Activated CD4-positive, alpha-beta T cell treated with anti-CD3 and anti-CD28 coated beads for 36 hours (primary cell): ENCODE measurements at regions of chr21 and their contacts with region 1.

Region 1: GRCh38 chr21:32727687-32728455 is at the start of gene SYNJ1:
- DNase-seq: peak; percentile 97
- ATAC-seq: peak; percentile 91
- H3K4me3 Mint-ChIP-seq: peak within 1 kb of the TSS; percentile 93
- H3K27ac Mint-ChIP-seq: peak within 1 kb of the TSS; percentile 91
- H3K4me1 Mint-ChIP-seq: peaks cover 54% of the 10 kb centered on the region
- H3K27me3 Mint-ChIP-seq: no peaks in the 10 kb centered on the region
- total RNA-seq, gene SYNJ1: 6.3 to 10.5 TPM

Region 2: DNA sequence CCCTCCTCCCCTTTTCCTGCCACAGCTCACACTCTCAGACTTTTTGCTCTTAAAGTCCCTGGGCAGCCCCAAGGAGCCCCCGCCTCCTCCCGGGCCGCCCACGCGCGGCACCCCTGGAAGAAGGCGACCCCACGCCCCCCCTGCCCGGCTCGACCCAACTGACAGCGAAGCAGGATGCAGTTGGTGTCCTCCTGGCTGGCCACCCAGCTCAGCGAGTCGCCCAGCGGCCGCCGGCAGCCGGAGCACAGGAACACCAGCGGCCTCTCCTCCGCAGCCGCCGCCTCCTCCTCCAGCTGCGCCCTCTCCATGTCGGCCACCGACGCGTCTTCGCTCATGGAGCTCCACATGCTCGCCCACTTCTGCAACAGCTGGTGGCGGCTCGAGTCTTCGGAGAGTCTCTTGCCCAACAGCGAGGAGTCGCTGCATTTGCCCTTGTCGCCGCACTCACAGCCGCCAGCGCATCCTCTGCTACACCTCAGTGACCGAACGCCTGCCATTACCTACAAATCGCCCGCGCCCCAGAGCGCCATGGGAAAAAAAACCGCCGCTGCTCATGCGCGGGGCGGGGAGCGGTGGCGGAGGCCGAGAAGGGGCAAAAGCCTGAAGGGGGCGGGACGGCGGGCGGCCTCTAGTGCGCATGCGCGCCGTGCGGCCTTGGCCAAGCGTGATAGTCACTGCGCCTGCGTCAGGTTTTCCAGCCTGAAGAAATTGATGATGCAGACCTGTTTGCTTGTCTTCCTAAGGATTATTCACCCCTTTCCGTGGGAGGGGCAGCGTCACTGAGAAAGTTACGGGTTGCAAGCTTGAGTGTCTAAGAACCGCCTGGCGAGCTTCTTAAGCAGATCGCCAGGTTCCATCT is 449.1 kb before region 1 on chr21 and contains the start of gene MIS18A:
- CTCF ChIA-PET with region 1: no interaction called
- POLR2A ChIA-PET with region 1: interaction called, 3 read pairs
- intact Hi-C with region 1: loop called in 1 of 2 experiments (anchors 1 kb)
- DNase-seq: peak; percentile 98
- ATAC-seq: peak; percentile 90
- H3K4me3 Mint-ChIP-seq: peak within 1 kb of the TSS; percentile 86
- H3K27ac Mint-ChIP-seq: peak within 1 kb of the TSS; percentile 84
- H3K4me1 Mint-ChIP-seq: peaks cover 17% of the 10 kb centered on the region
- H3K27me3 Mint-ChIP-seq: no peaks in the 10 kb centered on the region
- total RNA-seq, gene MIS18A: 21.5 to 35.3 TPM

Region 3: DNA sequence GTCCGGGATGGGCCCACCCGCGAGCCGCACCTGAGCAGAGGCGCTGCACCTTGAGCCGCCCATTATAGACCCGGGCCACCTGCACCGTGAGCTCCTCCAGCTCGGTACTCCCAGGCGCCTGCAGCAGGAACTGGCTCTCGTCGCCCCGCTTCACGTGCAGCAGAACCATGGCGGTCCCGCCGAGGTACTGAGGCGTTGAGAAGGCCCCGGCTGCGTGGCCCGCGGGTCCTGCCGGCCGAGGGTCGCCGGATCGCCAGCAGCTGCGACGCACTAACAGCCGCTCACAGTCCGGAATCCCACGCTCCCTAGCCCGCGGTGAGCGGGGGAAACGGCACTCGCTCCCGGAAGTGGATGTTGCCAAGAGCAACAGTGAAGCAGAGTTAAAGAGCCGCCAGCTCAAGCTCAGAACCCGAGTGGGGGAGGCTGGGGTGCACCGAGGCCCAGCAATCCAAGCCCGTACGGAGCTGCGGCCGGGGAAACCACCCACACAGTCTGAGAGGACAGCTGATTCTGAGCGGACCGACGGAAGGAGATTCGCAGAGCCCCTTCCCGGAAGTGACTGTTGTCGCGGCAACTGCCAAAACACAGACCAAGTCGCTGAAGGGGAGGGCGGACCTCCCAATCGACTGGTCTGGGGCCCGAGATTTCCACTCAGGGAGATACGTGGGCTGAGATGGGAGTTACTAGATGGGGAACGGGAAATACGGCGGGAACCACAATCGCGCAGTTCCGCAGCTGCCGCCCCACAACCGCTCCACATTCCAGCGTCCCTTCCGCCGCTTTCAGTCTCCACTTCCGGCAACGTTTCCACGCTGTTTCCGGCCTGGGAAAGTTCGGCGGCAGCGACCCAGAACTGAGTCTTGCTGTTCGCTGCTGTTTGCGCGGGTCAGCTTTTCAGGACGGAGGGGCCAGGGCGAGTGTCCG is 115.5 kb before region 1 on chr21 and contains the start of gene CFAP298:
- CTCF ChIA-PET with region 1: no interaction called
- POLR2A ChIA-PET with region 1: no interaction called
- intact Hi-C with region 1: loop called (anchors 1 to 2 kb)
- DNase-seq: peak; percentile 92
- ATAC-seq: peak; percentile 90
- H3K4me3 Mint-ChIP-seq: peak within 1 kb of the TSS; percentile 96
- H3K27ac Mint-ChIP-seq: peak within 1 kb of the TSS; percentile 90
- H3K4me1 Mint-ChIP-seq: peaks cover 9% of the 10 kb centered on the region
- H3K27me3 Mint-ChIP-seq: no peaks in the 10 kb centered on the region
- total RNA-seq, gene CFAP298: 39.5 to 47.9 TPM

Region 4: DNA sequence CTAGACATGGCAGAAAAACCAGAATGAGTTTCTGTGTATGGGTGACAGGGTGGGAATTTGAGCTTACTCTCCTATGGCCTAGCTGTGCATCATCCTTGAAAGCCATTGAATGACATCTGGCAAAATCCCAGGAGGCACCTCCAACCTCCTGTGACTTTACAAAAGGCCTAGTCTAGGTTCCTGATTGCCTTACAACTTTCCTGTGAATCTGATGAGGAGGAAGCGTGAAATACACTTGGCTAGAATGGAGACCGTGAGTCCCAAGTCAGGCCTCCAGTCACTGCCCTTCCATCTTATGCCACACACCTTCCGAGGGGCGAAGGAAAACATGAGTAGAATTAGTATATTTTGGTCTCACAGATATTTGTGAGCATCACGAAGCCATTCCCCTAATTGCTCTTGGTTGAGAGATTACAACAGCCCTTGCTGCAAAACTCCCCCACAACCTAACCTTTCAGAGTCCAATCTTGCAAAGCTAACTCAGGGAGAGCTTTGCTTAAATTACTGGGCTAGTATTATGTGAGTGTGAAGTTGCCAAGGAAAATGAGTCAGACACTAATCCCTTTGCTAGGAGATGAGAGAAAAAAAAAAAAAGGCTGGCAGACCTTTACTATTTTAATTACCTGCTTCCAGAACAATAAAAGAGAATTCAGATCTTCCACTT is 80.0 kb after region 1 on chr21:
- CTCF ChIA-PET with region 1: no interaction called
- POLR2A ChIA-PET with region 1: no interaction called
- intact Hi-C with region 1: loop called in 1 of 2 experiments (anchors 5 kb)
- DNase-seq: no peak
- ATAC-seq: no peak
- H3K4me3 Mint-ChIP-seq: no peak overlapping the region
- H3K27ac Mint-ChIP-seq: peak overlapping the region; percentile 45
- H3K4me1 Mint-ChIP-seq: peaks cover 35% of the 10 kb centered on the region
- H3K27me3 Mint-ChIP-seq: no peaks in the 10 kb centered on the region

Region 5: GRCh38 chr21:33491373-33492102 is 763.7 kb after region 1 on chr21 and contains the start of gene DNAJC28:
- CTCF ChIA-PET with region 1: no interaction called
- POLR2A ChIA-PET with region 1: no interaction called
- intact Hi-C with region 1: loop called in 1 of 2 experiments (anchors 5 kb)
- DNase-seq: peak; percentile 95
- ATAC-seq: peak; percentile 99
- H3K4me3 Mint-ChIP-seq: peak within 1 kb of the TSS; percentile 87
- H3K27ac Mint-ChIP-seq: peak within 1 kb of the TSS; percentile 91
- H3K4me1 Mint-ChIP-seq: peaks cover 9% of the 10 kb centered on the region
- H3K27me3 Mint-ChIP-seq: no peaks in the 10 kb centered on the region
- total RNA-seq, gene DNAJC28: 0.37 to 0.43 TPM